Posterior vena cava (tissue), 2 donors: ENCODE measurements at regions of chr16 and their contacts with region 1.

Region 1: GRCh38 chr16:27779641-27780164 is 229.8 kb downstream of the KATNIP start:
- DNase-seq: no peak

Region 2: DNA sequence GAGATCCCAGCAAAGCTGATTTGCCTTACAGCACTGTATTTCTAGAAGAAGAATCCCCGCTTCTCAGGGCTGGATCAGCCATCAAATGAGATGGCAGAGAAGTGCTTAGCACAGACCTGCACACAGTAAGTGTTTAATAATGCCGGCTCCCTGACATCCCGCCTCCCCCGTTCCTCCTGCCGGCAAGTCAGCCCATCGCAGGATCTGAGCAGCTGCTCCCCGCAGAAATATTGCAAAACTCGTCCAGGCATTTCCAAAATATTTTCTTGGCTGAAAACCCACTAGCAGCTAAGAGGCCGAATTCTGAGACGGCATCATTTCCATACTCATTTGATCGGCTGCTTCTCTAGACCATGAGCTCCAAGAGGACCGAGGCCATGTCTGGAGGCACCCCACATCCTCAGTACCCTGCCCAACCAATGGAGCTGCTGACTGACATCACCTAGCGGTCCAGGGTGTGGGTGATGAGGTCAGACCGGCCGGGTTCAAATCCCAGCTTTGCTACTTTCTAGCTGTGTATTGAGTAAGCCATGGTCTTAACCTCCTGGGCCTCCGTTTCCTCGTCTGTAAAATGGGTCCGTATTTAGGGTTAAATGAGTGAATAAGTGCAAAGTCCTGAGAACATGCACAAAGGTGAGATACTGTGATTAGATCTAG is 21.7 kb after region 1 on chr16:
- intact Hi-C with region 1: loop called in 1 of 2 experiments (anchors 1 kb)
- DNase-seq: no peak

Region 3: DNA sequence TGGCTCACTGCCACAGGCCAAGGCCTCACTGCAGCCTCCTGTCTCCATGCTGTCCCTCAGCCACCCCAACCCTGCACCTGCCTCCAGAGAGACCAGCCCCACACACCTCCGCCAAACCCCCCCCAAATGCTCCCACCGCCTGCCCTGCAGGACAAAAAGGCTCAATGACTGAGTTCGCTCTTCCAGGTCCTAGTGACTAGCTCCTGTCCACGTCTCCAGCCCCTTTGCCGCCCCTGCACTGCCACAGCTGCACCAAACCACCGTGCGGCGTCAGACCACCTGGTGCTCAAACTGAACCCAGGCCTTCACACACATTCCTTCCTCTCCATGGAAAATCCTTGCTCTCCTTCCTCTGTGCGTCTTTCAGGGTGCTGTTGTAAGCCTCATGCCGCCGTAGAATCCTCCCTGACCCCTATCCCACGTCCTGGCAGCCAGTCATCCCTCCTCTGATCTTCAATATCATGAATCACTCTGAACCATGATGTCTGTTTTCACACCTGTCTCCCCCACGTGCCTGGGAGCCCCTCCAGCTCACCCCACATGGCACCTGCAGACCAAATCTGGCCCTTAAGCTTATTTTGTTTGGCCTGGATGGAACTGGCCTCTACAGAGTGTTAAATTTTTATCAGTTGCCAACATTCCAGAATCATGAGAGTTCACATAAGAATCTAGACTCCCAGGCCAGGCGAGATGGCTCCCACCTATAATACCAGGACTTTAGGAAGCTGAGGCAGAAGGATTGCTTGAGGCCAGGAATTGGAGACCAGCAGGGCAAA is 288.1 kb after region 1 on chr16:
- intact Hi-C with region 1: loop called (anchors 5 to 10 kb)
- DNase-seq: no peak